ENCODE measurements at regions of chr6 and their contacts with region 1.

Region 1: DNA sequence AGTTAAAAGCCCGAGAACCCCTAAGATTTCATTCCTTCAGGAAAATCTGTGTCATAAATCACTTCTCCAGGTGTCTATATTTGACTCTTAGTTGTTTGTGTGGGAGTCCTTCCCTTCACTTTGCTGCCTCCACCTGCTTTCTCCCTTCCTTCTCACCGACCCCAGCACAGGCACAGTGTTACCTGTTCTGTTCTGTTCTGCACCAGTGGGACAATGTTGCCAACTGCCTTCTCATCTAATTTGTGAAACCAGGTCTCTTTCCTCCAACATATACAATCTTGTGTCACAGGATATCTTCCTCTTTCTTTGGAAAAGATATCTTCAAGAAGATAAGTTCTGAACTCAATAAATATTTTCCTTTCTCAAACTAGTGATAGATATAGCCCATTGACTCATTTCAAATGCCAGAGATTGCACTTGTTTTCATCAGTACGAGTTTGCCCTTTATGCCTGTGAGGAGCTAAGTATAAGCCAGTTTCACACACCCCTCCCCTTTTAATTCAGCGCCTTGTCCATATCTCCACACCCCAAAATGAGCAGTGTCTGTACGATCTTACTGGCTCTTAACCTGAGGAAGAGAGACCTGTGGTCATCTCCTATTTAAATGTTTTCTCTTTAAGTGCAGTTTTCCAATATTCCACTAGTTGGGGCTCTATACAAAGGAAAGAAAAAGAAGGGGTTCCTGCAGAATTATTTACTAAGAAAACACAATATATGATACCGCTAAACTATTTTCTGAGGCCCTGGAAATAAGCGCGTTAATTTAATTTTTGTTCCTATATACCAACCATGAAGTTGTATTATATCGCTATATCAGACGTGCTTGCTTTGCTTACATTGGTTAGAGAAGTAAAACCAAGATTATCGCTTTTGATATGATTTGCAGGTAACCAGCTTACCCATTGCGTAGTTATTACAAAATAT is 81.6 kb upstream of the PREP start:
- ATAC-seq: peak; percentile 17 to 55 (median 46)
- H3K4me3 ChIP-seq: no peak overlapping the region
- H3K27ac ChIP-seq: no peak overlapping the region
- H3K4me1 ChIP-seq: peaks cover 29 to 41% of the 10 kb centered on the region in 2 donors

Region 2: DNA sequence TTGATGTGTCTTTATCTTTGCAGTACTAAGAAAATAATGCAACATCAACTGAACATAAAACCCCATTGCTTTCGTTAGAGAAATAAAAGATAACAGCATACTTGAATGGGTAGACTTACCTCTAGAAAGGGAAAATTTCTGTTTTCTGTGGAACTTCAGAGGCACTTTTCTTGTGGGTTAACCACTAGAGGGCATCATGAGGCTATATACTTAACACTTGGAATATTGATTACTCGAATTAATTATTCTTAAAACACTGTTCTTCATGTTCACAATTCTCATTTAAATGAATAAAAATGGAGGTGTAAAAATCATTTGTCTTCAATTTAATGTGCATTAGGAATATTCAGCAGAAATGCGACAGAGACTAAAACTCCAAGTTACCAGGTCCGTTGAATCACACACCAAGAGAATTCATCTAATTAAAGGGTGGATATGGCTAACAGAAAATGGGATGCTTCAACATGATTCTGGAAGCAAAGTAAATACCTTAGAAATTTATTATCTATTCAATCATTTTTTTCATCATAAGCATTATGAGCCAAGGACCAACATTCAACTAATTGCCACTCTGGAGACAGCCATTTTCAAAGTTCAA is 249.2 kb after region 1 on chr6:
- in situ Hi-C with region 1: loop called in 1 of 9 experiments (anchors 25 kb)
- ATAC-seq: no peak
- H3K4me3 ChIP-seq: no peak overlapping the region
- H3K27ac ChIP-seq: no peak overlapping the region
- H3K4me1 ChIP-seq: no peaks in the 10 kb centered on the region

Region 3: GRCh38 chr6:106085984-106086813 is 601.7 kb after region 1 on chr6 and contains the start of gene PRDM1:
- in situ Hi-C with region 1: loop called in 1 of 9 experiments (anchors 25 kb)
- ATAC-seq: peak; percentile 76 to 97 (median 94)
- H3K4me3 ChIP-seq: peak within 1 kb of the TSS; percentile 23 to 37 (median 28)
- H3K27ac ChIP-seq: no peak within 1 kb of the TSS
- H3K4me1 ChIP-seq: peaks cover 0 to 4% of the 10 kb centered on the region in 2 donors
- total RNA-seq, gene PRDM1: 0.23 to 4.3 (median 2.0) TPM

Region 4: DNA sequence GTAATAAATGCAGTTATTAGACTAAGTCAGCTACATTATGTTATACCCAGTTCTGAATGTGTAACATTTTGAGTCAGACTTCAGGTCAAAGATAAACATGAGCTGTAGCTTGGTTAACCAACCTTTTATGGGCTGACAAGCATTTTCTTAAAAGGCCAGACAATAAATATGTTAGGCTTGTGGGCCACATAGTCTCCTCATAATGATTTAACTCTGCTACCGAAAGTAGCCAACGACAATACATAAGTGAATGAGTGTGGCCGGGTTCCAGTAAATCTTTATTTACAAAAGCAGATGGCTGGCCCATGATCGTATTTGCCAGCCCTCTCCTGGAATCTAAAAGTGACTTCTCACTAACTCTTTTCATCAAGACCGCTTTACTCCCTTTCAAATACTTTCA is 791.2 kb after region 1 on chr6:
- in situ Hi-C with region 1: loop called in 1 of 9 experiments (anchors 25 kb)
- ATAC-seq: peak in 1 of 8 experiments; percentile 84
- H3K4me3 ChIP-seq: no peak overlapping the region
- H3K27ac ChIP-seq: no peak overlapping the region
- H3K4me1 ChIP-seq: no peaks in the 10 kb centered on the region

Region 5: DNA sequence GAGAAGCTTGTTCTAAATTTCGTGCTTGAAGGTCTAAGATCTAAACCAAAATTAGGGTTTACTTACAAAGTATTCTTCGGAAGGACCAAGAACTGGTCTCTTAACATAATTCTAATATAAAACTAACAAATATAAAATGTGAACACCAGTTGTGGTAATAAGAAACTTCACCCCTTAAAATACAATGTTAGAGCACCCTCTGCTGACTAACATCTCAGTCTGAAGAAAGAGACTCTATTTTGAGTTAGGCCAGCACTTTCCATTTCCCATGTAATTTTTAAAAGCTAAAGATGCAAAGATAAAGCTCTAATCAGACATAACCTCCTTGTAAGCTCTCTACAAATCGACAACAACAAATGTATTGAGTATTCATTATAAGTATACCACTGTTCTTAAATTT is 816.4 kb after region 1 on chr6:
- in situ Hi-C with region 1: loop called in 2 of 9 experiments (anchors 25 kb)
- ATAC-seq: peak in 4 of 8 experiments; percentile 24 to 84 (median 65)
- H3K4me3 ChIP-seq: no peak overlapping the region
- H3K27ac ChIP-seq: no peak overlapping the region
- H3K4me1 ChIP-seq: no peaks in the 10 kb centered on the region